ENCODE measurements at regions of chr5 and their contacts with region 1.

Region 1: GRCh38 chr5:151252762-151253604 is at the start of gene GM2A:
- DNase-seq: peak; percentile 97
- H3K4me3 ChIP-seq: peak within 1 kb of the TSS; percentile 77
- H3K27me3 ChIP-seq: no peaks in the 10 kb centered on the region
- CTCF ChIP-seq: no peak
- polyA plus RNA-seq, gene GM2A: 11.5 and 12.7 TPM in 2 replicates

Region 2: GRCh38 chr5:151223469-151224264 is 29.3 kb before region 1 on chr5 and contains the start of gene CCDC69:
- CTCF ChIA-PET with region 1: interaction called, 3 read pairs
- POLR2A ChIA-PET with region 1: interaction called, 14 read pairs
- DNase-seq: peak; percentile 4
- H3K4me3 ChIP-seq: peak within 1 kb of the TSS; percentile 61
- H3K27me3 ChIP-seq: no peaks in the 10 kb centered on the region
- CTCF ChIP-seq: peak; percentile 41
- polyA plus RNA-seq, gene CCDC69: 0.93 and 1.0 TPM in 2 replicates

Region 3: DNA sequence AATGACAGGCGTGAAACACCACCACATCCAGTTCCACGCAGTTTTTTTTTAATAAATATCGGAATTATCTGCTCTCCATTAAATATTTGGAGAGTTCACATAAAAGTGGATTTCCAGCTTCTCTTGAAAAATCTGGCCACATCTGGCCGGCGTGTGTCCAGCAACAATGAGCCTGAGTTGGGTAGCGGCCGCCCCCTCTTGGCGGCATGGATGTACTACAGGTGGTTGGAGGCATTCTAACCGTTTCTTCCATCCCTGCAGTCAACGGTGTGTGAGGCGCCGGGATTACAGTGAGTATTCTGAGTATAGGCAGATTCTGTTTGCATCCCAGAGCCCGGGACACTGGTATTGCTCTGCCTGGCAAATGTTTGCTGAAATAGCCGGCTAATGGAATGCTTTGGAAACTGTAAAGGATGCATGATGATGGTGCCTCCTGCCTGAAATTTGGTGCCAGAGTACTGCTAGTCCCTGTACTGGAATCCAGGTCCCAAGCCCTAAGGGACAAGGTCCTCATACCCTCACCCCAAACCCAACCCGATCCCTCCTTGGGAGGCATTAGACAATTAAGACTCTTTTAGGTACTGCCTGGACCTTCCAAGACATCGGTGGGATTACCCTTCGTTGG is 13.6 kb before region 1 on chr5:
- CTCF ChIA-PET with region 1: interaction called, 19 read pairs
- POLR2A ChIA-PET with region 1: no interaction called
- DNase-seq: no peak
- H3K4me3 ChIP-seq: no peak overlapping the region
- H3K27me3 ChIP-seq: peaks cover 7% of the 10 kb centered on the region
- CTCF ChIP-seq: peak; percentile 96

Region 4: DNA sequence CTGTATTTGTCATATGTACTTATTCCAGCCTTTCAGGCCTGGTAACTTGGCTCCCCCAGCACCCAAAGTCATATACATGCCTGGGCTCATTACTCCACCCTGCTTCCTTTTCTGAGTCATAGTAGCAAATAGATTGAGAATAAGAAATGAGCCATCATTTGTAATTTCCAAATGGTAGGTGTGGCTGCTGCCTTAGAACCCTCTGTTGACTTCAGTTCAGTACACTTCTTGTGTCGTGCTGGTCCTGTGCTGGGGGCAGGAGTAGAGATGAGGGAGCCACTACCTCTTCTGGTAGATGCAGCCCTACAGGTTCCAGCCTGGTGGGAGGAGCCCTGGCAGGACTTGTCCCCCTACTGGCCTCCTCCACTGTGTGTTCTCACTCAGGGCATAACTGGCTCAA is 11.1 kb after region 1 on chr5:
- CTCF ChIA-PET with region 1: no interaction called
- POLR2A ChIA-PET with region 1: interaction called, 10 read pairs
- DNase-seq: no peak
- H3K4me3 ChIP-seq: no peak overlapping the region
- H3K27me3 ChIP-seq: no peaks in the 10 kb centered on the region
- CTCF ChIP-seq: no peak

Region 5: GRCh38 chr5:152218694-152219093 is 965.7 kb after region 1 on chr5:
- CTCF ChIA-PET with region 1: no interaction called
- POLR2A ChIA-PET with region 1: no interaction called
- DNase-seq: no peak
- H3K4me3 ChIP-seq: no peak overlapping the region
- H3K27me3 ChIP-seq: no peaks in the 10 kb centered on the region
- CTCF ChIP-seq: no peak